CD8-positive, alpha-beta memory T cell (primary cell): ENCODE measurements at regions of chr22 and their contacts with region 1.

Region 1: DNA sequence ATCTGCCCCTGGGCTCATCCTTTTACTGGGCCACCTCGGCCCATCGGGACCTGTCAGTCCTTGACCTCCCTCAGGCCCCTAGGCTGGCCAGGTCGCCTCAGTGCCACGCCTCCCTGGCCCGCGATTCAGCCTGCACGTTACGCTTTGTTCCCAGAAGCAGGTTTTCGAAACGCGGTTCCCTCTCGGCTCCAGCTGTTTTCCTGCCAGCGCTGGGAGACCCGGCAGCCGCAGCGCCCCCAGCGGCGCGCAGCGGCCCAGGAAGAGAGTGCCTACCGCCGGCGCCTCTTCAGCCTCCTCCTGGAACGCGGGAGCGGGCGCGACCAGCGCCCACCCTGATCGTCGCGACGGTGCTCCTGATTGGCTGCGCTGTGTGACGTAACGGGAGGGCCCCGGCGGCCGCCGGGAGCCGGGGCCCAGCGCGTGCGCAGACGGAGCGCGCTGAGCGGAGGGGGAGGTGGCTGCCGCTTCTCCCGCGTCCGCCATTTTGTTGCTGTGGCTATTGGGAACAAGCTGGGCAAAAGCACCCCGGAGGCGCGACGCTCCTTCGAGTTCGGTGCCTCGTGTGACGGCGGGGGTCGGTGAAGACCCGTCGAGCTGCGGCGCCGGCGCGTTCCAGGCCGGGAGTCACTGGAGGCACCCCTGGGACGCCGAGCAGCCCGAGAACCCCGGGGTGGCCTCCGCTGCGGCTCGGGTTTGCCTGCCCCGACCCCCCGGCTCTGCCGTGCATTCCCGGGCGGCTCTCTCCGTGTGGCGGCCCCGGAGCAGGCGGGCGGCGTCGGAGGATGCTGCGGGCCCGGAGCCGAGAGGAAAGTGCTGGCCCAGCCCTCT is at the start of gene CRKL:
- DNase-seq: peak; percentile 94 to 97 (median 95)
- H3K4me3 ChIP-seq: peak within 1 kb of the TSS; percentile 98
- H3K4me3 Mint-ChIP-seq: peak within 1 kb of the TSS; percentile 84 to 99 (median 99)
- H3K27ac ChIP-seq: peak within 1 kb of the TSS; percentile 99
- H3K27ac Mint-ChIP-seq: peak within 1 kb of the TSS; percentile 50 to 98 (median 96)
- H3K4me1 ChIP-seq: peaks cover 40% of the 10 kb centered on the region
- H3K4me1 Mint-ChIP-seq: peaks cover 32 to 44% (median 42%) of the 10 kb centered on the region in 3 donors
- H3K27me3 ChIP-seq: no peaks in the 10 kb centered on the region
- H3K27me3 Mint-ChIP-seq: no peaks in the 10 kb centered on the region
- total RNA-seq, gene CRKL: 94.0 to 98.1 TPM

Region 2: GRCh38 chr22:20904008-20904979 is 12.9 kb before region 1 on chr22:
- CTCF ChIA-PET with region 1: no interaction called
- POLR2A ChIA-PET with region 1: interaction called, 10 read pairs
- DNase-seq: no peak
- H3K4me3 ChIP-seq: no peak overlapping the region
- H3K4me3 Mint-ChIP-seq: no peak overlapping the region
- H3K27ac ChIP-seq: no peak overlapping the region
- H3K27ac Mint-ChIP-seq: no peak overlapping the region
- H3K4me1 ChIP-seq: no peaks in the 10 kb centered on the region
- H3K4me1 Mint-ChIP-seq: no peaks in the 10 kb centered on the region
- H3K27me3 ChIP-seq: no peaks in the 10 kb centered on the region
- H3K27me3 Mint-ChIP-seq: no peaks in the 10 kb centered on the region